ENCODE measurements at regions of chr5 and their contacts with region 1.

Region 1: DNA sequence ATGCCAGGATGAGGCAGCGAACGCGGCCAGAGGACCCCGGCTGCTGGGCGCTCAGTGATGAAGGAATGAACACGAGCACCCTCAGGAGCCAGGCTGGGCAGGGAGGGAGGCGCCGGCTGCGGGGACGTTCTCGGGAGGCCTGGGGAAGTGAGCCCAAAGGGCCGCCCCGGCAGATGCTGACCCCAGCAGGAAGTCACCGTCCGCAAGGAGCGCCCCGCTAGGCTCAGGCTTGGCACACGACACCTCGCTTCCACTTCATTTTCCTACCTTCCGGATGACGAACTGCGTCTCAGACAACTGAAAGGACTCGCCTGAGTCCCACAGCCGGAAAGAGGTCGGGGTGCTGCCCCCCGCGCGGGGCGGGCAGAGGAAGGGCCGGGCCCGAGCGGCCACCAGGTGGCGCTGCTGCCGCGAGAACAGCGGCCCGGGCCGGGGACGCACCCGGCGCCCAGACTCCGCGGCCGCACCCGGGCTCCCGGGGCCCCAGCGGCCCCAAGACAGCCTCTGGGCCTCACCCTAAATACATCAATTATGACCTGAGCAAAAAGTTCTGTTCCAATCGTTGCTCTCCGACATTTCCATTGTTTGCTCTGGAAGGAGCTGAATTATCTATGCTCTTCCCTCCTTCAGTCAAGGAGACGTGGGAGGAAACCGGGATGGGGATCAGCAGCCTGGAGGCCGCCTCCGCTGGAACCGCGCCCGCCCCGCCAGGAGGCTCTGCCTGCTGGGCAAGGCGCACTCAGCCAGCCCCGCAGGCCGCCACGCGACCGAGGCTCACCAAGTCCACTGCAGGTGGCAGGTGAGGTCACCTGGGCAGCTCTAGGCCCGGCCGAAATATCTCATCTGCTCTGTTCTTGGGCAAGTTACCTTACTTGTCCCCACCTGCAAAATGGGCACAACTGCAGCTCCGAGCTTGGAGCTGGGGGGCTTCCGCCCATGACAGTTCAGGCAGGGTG is 107.0 kb downstream of the ZNF354C start:
- DNase-seq: peak; percentile 17 to 30 (median 21)
- H3K4me3 ChIP-seq: peak overlapping the region in 1 of 3 experiments; percentile 53
- H3K4me3 Mint-ChIP-seq: peak overlapping the region; percentile 56 to 82
- H3K27ac ChIP-seq: no peak overlapping the region
- H3K27ac Mint-ChIP-seq: no peak overlapping the region
- H3K4me1 ChIP-seq: peaks cover 3 to 8% of the 10 kb centered on the region in 2 donors
- H3K4me1 Mint-ChIP-seq: peaks cover 7% of the 10 kb centered on the region
- H3K27me3 ChIP-seq: no peaks in the 10 kb centered on the region
- H3K27me3 Mint-ChIP-seq: peaks cover 12 to 20% (median 14%) of the 10 kb centered on the region in 3 donors
- CTCF ChIP-seq: peak; percentile 97

Region 2: GRCh38 chr5:178986326-178986960 is 180.7 kb before region 1 on chr5:
- intact Hi-C with region 1: no loop called
- DNase-seq: no peak
- H3K4me3 ChIP-seq: no peak overlapping the region
- H3K4me3 Mint-ChIP-seq: no peak overlapping the region
- H3K27ac ChIP-seq: no peak overlapping the region
- H3K27ac Mint-ChIP-seq: no peak overlapping the region
- H3K4me1 ChIP-seq: no peaks in the 10 kb centered on the region
- H3K4me1 Mint-ChIP-seq: no peaks in the 10 kb centered on the region
- H3K27me3 ChIP-seq: no peaks in the 10 kb centered on the region
- H3K27me3 Mint-ChIP-seq: peaks cover 0 to 2% (median 0%) of the 10 kb centered on the region in 3 donors
- CTCF ChIP-seq: no peak

Region 3: GRCh38 chr5:179265514-179266290 is 98.5 kb after region 1 on chr5:
- intact Hi-C with region 1: no loop called
- DNase-seq: no peak
- H3K4me3 ChIP-seq: no peak overlapping the region
- H3K4me3 Mint-ChIP-seq: no peak overlapping the region
- H3K27ac ChIP-seq: no peak overlapping the region
- H3K27ac Mint-ChIP-seq: no peak overlapping the region
- H3K4me1 ChIP-seq: no peaks in the 10 kb centered on the region
- H3K4me1 Mint-ChIP-seq: no peaks in the 10 kb centered on the region
- H3K27me3 ChIP-seq: no peaks in the 10 kb centered on the region
- H3K27me3 Mint-ChIP-seq: peaks cover 5 to 19% (median 5%) of the 10 kb centered on the region in 3 donors
- CTCF ChIP-seq: no peak

Region 4: GRCh38 chr5:179494774-179495526 is 327.8 kb after region 1 on chr5:
- intact Hi-C with region 1: loop called (anchors 1 to 5 kb)
- DNase-seq: no peak
- H3K4me3 ChIP-seq: no peak overlapping the region
- H3K4me3 Mint-ChIP-seq: no peak overlapping the region
- H3K27ac ChIP-seq: no peak overlapping the region
- H3K27ac Mint-ChIP-seq: no peak overlapping the region
- H3K4me1 ChIP-seq: no peaks in the 10 kb centered on the region
- H3K4me1 Mint-ChIP-seq: peaks cover 2% of the 10 kb centered on the region
- H3K27me3 ChIP-seq: no peaks in the 10 kb centered on the region
- H3K27me3 Mint-ChIP-seq: peaks cover 2 to 7% (median 7%) of the 10 kb centered on the region in 3 donors
- CTCF ChIP-seq: no peak

Measured in CD14-positive monocyte (primary cell).